ENCODE measurements at regions of chr3 and their contacts with region 1.

Region 1: GRCh38 chr3:127822698-127823425 is 547 bp upstream of the MGLL start:
- DNase-seq: peak; percentile 79 to 88
- ATAC-seq: peak; percentile 89
- H3K4me3 ChIP-seq: peak overlapping the region; percentile 74 to 89
- H3K27ac ChIP-seq: peak overlapping the region; percentile 48 to 62
- H3K4me1 ChIP-seq: peaks cover 0 to 3% of the 10 kb centered on the region in 2 donors
- H3K27me3 ChIP-seq: no peaks in the 10 kb centered on the region

Region 2: GRCh38 chr3:127512256-127512655 is 310.6 kb before region 1 on chr3:
- intact Hi-C with region 1: no loop called
- DNase-seq: no peak
- ATAC-seq: no peak
- H3K4me3 ChIP-seq: no peak overlapping the region
- H3K27ac ChIP-seq: no peak overlapping the region
- H3K4me1 ChIP-seq: no peaks in the 10 kb centered on the region
- H3K27me3 ChIP-seq: no peaks in the 10 kb centered on the region

Region 3: DNA sequence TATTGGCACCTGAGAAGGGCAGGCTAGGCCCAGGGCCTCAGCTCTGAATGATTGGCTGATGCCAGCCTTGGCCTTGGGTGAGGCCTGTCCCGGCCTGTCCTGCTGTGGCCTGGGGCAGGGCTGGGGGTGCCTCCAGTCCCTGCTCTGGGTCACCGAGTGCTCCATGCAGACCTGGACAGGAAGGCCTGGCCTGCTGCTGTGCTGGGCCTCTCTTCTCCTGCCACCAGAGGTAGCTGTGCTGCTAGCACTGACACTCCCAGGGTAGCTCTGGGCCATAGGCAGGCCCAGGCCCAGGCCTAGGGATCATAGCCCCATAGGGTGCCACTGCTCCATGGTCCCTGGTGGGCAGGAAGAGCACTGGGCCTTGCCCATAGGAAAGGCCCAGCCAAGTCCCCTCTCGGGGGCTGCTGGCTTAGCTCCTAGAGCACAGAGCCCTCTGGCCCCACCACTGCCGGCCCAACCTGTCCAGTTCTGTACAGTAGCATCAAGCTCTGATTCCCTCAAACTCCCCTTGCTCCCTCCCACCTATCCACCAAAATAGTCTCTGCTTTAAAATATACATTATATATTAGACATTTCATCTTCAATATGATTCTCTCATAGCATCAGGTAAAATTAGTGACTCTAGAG is 131.9 kb before region 1 on chr3:
- intact Hi-C with region 1: loop called (anchors 2 to 5 kb)
- DNase-seq: peak; percentile 72 to 79
- ATAC-seq: peak; percentile 84
- H3K4me3 ChIP-seq: no peak overlapping the region
- H3K27ac ChIP-seq: peak overlapping the region; percentile 70 to 90
- H3K4me1 ChIP-seq: no peaks in the 10 kb centered on the region
- H3K27me3 ChIP-seq: no peaks in the 10 kb centered on the region

Region 4: DNA sequence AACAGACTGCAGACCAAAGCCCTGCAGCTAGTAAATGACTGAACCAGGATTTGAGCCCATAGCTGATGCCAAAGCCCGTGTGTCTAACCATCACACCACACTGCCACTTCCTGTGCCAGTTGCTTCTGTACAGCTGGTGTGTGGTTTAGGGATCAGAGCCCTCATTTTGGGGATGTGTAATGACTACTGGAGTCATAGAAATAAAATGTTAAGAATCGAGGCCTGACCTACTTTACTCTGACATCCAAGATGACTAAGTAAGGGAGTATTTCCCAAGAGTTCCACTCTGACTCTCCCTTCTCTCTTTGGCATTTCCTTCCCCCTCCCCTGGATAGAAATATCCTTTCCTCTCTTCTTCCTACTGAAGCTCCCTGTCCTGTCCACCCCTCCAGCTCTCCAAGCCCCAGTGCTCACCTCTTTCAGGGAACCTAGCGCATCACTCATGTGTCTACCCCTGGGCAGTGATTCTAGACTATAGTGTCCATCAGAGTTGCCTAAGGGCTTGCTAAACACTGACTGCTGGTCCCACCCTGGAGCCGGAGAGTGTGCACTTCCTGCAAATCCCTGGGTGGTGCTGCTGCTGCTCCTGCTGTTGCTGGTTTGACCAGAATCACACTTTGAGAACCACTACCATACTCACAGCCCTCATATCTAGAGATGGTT is 54.4 kb before region 1 on chr3:
- intact Hi-C with region 1: loop called in 1 of 2 experiments (anchors 5 kb)
- DNase-seq: peak; percentile 76 to 77
- ATAC-seq: peak; percentile 81
- H3K4me3 ChIP-seq: no peak overlapping the region
- H3K27ac ChIP-seq: peak overlapping the region in 1 of 2 donors; percentile 65
- H3K4me1 ChIP-seq: no peaks in the 10 kb centered on the region
- H3K27me3 ChIP-seq: no peaks in the 10 kb centered on the region

Region 5: GRCh38 chr3:127953091-127954035 is 130.5 kb after region 1 on chr3:
- intact Hi-C with region 1: loop called in 1 of 2 experiments (anchors 5 kb)
- DNase-seq: no peak
- ATAC-seq: no peak
- H3K4me3 ChIP-seq: no peak overlapping the region
- H3K27ac ChIP-seq: peak overlapping the region in 1 of 2 donors; percentile 28
- H3K4me1 ChIP-seq: no peaks in the 10 kb centered on the region
- H3K27me3 ChIP-seq: no peaks in the 10 kb centered on the region